ENCODE measurements at regions of chr12 and their contacts with region 1.

Region 1: GRCh38 chr12:6062757-6063735 is 61.4 kb downstream of the VWF start:
- DNase-seq: peak; percentile 79 to 85
- H3K4me3 ChIP-seq: no peak overlapping the region
- H3K4me3 Mint-ChIP-seq: no peak overlapping the region
- H3K27ac Mint-ChIP-seq: no peak overlapping the region
- H3K4me1 ChIP-seq: peaks cover 16% of the 10 kb centered on the region
- H3K4me1 Mint-ChIP-seq: peaks cover 39% of the 10 kb centered on the region
- H3K27me3 ChIP-seq: no peaks in the 10 kb centered on the region
- H3K27me3 Mint-ChIP-seq: no peaks in the 10 kb centered on the region
- CTCF ChIP-seq: peak; percentile 99 to 100

Region 2: DNA sequence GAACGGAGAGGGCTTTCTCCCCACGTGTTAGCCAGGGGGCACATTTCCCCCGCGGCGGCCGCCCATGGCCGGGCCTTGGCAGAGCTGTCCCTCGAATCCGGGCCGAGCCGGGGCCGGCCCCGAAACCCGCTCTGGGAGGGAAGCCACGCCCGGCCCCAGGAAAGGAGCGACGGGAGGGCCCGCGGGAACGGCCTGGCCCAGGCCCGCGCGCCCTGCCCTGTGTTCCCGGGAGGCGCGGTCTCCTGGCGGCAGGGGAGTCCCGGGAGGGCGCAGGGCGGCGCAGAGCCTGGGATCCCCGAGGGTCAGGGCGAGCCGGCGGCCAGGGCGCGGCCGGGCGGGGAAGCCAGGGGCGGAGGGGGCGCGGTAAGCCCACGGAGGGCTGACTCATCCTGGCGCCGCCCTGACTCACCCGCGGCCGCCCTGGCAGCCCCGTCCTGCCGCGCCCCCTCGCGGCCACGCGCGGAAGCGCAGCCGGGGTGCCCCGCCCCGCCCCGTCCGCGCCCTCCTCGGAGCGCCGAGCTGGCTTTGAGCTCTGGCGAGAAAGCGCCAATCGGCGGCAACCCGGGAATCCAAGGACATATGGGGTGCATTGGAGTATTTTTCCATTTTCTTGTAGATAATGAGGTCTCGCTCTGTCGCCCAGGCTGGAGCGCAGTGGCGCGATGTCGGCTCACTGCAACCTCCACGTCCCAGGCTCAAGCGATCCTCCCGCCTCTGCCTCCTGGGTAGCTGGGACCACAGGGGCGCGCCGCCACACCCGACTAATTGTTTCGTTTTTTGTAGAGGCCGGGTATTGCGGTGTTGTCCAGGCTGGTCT is 215.6 kb after region 1 on chr12:
- CTCF ChIA-PET with region 1: interaction called, 18 read pairs
- POLR2A ChIA-PET with region 1: interaction called, 3 read pairs
- intact Hi-C with region 1: loop called (anchors 1 kb)
- DNase-seq: peak; percentile 89 to 97
- H3K4me3 ChIP-seq: peak overlapping the region; percentile 52
- H3K4me3 Mint-ChIP-seq: peak overlapping the region; percentile 80
- H3K27ac Mint-ChIP-seq: peak overlapping the region; percentile 93
- H3K4me1 ChIP-seq: peaks cover 23% of the 10 kb centered on the region
- H3K4me1 Mint-ChIP-seq: peaks cover 42% of the 10 kb centered on the region
- H3K27me3 ChIP-seq: no peaks in the 10 kb centered on the region
- H3K27me3 Mint-ChIP-seq: no peaks in the 10 kb centered on the region
- CTCF ChIP-seq: peak; percentile 34 to 99

Region 3: GRCh38 chr12:6285063-6285477 is 222.0 kb after region 1 on chr12:
- CTCF ChIA-PET with region 1: interaction called, 18 read pairs
- POLR2A ChIA-PET with region 1: no interaction called
- intact Hi-C with region 1: loop called (anchors 1 kb)
- DNase-seq: peak; percentile 76 to 87
- H3K4me3 ChIP-seq: no peak overlapping the region
- H3K4me3 Mint-ChIP-seq: no peak overlapping the region
- H3K27ac Mint-ChIP-seq: no peak overlapping the region
- H3K4me1 ChIP-seq: peaks cover 10% of the 10 kb centered on the region
- H3K4me1 Mint-ChIP-seq: peaks cover 11% of the 10 kb centered on the region
- H3K27me3 ChIP-seq: no peaks in the 10 kb centered on the region
- H3K27me3 Mint-ChIP-seq: no peaks in the 10 kb centered on the region
- CTCF ChIP-seq: peak; percentile 94 to 99

Measured in Caco-2 (cell line).